B cell (primary cell): ENCODE measurements at regions of chr13 and their contacts with region 1.

Region 1: GRCh38 chr13:46492946-46493345 is 60.0 kb upstream of the LRCH1 start:
- DNase-seq: peak; percentile 56
- ATAC-seq: no peak
- H3K4me3 ChIP-seq: no peak overlapping the region
- H3K4me3 Mint-ChIP-seq: no peak overlapping the region
- H3K27ac ChIP-seq: no peak overlapping the region
- H3K27ac Mint-ChIP-seq: no peak overlapping the region
- H3K4me1 ChIP-seq: no peaks in the 10 kb centered on the region
- H3K4me1 Mint-ChIP-seq: no peaks in the 10 kb centered on the region
- H3K27me3 ChIP-seq: no peaks in the 10 kb centered on the region
- H3K27me3 Mint-ChIP-seq: no peaks in the 10 kb centered on the region
- CTCF ChIP-seq: peak; percentile 83

Region 2: GRCh38 chr13:46648166-46648635 is 155.3 kb after region 1 on chr13:
- CTCF ChIA-PET with region 1: no interaction called
- POLR2A ChIA-PET with region 1: no interaction called
- intact Hi-C with region 1: no loop called
- DNase-seq: peak; percentile 56
- ATAC-seq: peak; percentile 83
- H3K4me3 ChIP-seq: no peak overlapping the region
- H3K4me3 Mint-ChIP-seq: peak overlapping the region; percentile 35
- H3K27ac ChIP-seq: no peak overlapping the region
- H3K27ac Mint-ChIP-seq: peak overlapping the region; percentile 51
- H3K4me1 ChIP-seq: peaks cover 20 to 36% of the 10 kb centered on the region in 2 donors
- H3K4me1 Mint-ChIP-seq: peaks cover 69% of the 10 kb centered on the region
- H3K27me3 ChIP-seq: no peaks in the 10 kb centered on the region
- H3K27me3 Mint-ChIP-seq: no peaks in the 10 kb centered on the region
- CTCF ChIP-seq: no peak

Region 3: GRCh38 chr13:46687810-46688209 is 194.9 kb after region 1 on chr13:
- CTCF ChIA-PET with region 1: interaction called, 10 read pairs
- POLR2A ChIA-PET with region 1: no interaction called
- intact Hi-C with region 1: no loop called
- DNase-seq: peak; percentile 35
- ATAC-seq: peak; percentile 49
- H3K4me3 ChIP-seq: no peak overlapping the region
- H3K4me3 Mint-ChIP-seq: no peak overlapping the region
- H3K27ac ChIP-seq: no peak overlapping the region
- H3K27ac Mint-ChIP-seq: no peak overlapping the region
- H3K4me1 ChIP-seq: peaks cover 0 to 2% of the 10 kb centered on the region in 2 donors
- H3K4me1 Mint-ChIP-seq: peaks cover 21% of the 10 kb centered on the region
- H3K27me3 ChIP-seq: no peaks in the 10 kb centered on the region
- H3K27me3 Mint-ChIP-seq: no peaks in the 10 kb centered on the region
- CTCF ChIP-seq: no peak

Region 4: DNA sequence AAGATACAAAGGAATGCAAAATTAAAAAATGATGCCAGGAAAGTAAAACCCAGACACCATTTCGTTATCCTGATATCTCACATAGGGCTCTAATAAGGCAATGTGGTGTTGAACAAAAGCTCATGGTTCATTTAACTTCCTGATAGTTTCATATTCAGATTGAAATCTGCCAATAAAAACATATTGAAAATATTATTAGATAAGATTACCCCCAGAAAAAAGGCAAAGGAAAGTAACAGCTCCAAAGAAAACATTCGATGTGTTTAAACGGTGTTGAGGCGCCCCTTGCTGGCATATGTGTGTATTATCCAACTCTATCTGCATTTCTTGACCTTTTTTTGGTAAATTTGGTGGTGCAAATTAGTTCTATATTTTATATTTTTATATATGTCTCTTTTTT is 228.1 kb after region 1 on chr13:
- CTCF ChIA-PET with region 1: interaction called, 72 read pairs
- POLR2A ChIA-PET with region 1: no interaction called
- intact Hi-C with region 1: loop called (anchors 1 kb)
- DNase-seq: peak; percentile 55
- ATAC-seq: peak; percentile 43
- H3K4me3 ChIP-seq: no peak overlapping the region
- H3K4me3 Mint-ChIP-seq: no peak overlapping the region
- H3K27ac ChIP-seq: no peak overlapping the region
- H3K27ac Mint-ChIP-seq: no peak overlapping the region
- H3K4me1 ChIP-seq: no peaks in the 10 kb centered on the region
- H3K4me1 Mint-ChIP-seq: peaks cover 4% of the 10 kb centered on the region
- H3K27me3 ChIP-seq: no peaks in the 10 kb centered on the region
- H3K27me3 Mint-ChIP-seq: no peaks in the 10 kb centered on the region
- CTCF ChIP-seq: peak; percentile 85